Ascending aorta (tissue), 2 donors: ENCODE measurements at regions of chr4 and their contacts with region 1.

Region 1: DNA sequence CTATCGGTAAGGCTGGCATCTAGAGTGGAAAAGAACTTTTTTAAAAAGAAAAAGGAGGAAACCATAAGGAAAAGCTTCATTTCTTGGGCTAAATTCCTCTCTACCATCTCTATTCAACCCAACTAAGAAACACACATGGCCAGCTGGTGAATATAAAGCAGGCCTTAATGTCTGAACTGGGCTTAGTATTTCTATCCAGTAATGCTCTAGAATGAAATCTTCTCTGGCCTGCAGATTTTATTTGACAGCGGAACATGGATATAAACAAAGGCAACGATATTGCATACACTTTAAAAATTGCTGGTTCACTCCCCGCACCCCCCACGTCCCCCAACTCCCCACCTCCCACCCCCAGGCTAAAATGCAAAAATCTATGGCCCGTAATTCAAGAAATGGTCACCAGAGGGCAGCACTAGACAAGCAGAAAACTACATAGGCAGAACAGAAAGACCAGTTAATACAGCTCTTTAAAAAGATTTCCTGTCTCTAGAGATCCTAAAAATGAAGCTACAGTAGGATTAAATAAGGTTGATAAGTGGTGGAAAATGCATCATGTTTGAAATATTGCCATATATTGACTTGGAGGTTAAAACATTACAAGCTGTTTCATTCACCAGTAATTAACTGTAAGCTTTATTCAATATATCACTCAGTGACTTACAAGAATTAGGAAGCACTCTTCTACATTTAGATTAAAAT is 155.2 kb upstream of the GALNT7 start:
- DNase-seq: peak in 1 of 2 donors; percentile 72
- H3K4me3 ChIP-seq: no peak overlapping the region
- H3K27ac ChIP-seq: no peak overlapping the region
- H3K4me1 ChIP-seq: peaks cover 4 to 5% of the 10 kb centered on the region in 2 donors
- H3K27me3 ChIP-seq: no peaks in the 10 kb centered on the region
- CTCF ChIP-seq: peak; percentile 40 to 89 (median 85)

Region 2: DNA sequence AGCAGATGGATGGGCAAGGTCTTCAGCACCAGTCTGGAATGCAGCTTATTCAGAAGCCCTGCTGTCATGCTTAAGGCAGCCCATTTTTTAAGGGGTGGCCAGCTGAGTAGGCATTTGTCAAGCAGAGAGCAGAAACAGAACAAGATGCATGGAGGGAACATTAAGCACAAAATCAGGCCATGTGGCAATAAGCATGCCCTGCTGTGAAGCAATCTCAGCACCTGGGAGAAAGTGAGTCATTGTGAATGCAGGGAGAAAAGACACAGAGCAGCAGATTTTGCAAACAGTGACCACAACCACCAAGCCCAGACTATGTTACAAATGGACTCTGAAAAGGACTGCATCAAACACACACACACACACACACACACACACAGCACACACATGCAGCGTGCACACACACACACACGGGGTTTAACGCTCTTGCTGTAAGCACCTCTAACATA is 61.1 kb after region 1 on chr4:
- intact Hi-C with region 1: no loop called
- DNase-seq: no peak
- H3K4me3 ChIP-seq: no peak overlapping the region
- H3K27ac ChIP-seq: no peak overlapping the region
- H3K4me1 ChIP-seq: no peaks in the 10 kb centered on the region
- H3K27me3 ChIP-seq: no peaks in the 10 kb centered on the region
- CTCF ChIP-seq: no peak

Region 3: GRCh38 chr4:173168396-173169177 is 155.2 kb after region 1 on chr4 and contains the start of gene GALNT7:
- intact Hi-C with region 1: loop called (anchors 5 kb)
- DNase-seq: peak in 1 of 2 donors; percentile 80
- H3K4me3 ChIP-seq: peak within 1 kb of the TSS; percentile 70 to 98
- H3K27ac ChIP-seq: peak within 1 kb of the TSS; percentile 86 to 94
- H3K4me1 ChIP-seq: peaks cover 0 to 17% of the 10 kb centered on the region in 2 donors
- H3K27me3 ChIP-seq: no peaks in the 10 kb centered on the region
- CTCF ChIP-seq: no peak
- total RNA-seq, gene GALNT7: 8.2 TPM

Region 4: DNA sequence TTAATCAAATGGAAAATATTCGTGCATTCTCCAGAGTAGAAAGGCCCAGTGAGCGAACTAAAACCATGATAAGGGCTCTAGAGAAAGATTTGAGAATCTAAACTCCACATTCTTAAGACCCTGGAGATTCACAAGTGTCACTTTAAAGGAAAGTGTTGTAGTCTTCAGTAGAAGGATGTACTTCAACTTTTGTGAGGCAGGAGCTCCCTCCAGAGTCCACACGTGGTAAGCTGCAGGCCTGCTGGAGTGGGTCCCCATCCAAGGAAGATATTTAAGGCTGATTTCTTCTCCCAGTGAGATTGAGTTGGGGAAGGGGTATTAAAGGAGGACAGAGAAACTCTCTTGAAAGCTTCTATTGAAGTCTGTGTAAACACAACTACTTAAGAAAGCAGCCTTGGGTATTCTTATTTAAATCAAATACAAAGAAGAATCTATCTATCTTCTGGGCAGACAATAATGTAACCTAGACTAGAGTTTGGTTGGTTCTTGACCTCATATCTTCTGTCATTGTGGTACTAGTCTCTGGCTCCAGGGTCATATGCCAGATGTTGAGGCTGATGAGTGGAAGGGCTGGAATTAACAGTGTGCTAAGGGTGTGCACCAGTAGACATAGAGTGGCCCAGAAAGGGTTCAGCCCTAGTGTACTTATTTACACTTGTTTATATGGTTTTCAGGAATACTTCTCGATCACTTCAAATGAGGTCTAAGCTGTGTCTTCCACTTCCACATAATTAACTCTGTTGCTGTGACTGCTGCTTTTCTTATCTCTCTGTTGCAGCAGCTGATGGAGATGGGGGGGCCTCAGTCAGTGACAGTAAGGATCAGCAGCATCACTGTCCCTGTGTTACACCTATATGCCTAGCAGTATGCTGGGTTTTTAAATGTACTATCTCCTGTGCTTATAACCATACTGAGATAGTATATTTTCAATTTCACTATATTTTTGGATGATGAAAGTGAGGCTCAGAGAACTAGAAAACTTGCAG is 244.6 kb after region 1 on chr4:
- intact Hi-C with region 1: loop called (anchors 5 kb)
- DNase-seq: peak in 1 of 2 donors; percentile 69
- H3K4me3 ChIP-seq: no peak overlapping the region
- H3K27ac ChIP-seq: no peak overlapping the region
- H3K4me1 ChIP-seq: no peaks in the 10 kb centered on the region
- H3K27me3 ChIP-seq: no peaks in the 10 kb centered on the region
- CTCF ChIP-seq: peak; percentile 56 to 71 (median 58)

Region 5: GRCh38 chr4:173301518-173302201 is 288.3 kb after region 1 on chr4:
- intact Hi-C with region 1: loop called (anchors 5 kb)
- DNase-seq: no peak
- H3K4me3 ChIP-seq: no peak overlapping the region
- H3K27ac ChIP-seq: peak overlapping the region in 1 of 2 donors; percentile 31
- H3K4me1 ChIP-seq: peaks cover 0 to 7% of the 10 kb centered on the region in 2 donors
- H3K27me3 ChIP-seq: no peaks in the 10 kb centered on the region
- CTCF ChIP-seq: peak; percentile 44 to 86 (median 64)

Region 6: GRCh38 chr4:173380987-173381386 is 367.6 kb after region 1 on chr4:
- intact Hi-C with region 1: no loop called
- DNase-seq: no peak
- H3K4me3 ChIP-seq: no peak overlapping the region
- H3K27ac ChIP-seq: peak overlapping the region; percentile 7 to 17
- H3K4me1 ChIP-seq: peaks cover 2 to 9% of the 10 kb centered on the region in 2 donors
- H3K27me3 ChIP-seq: no peaks in the 10 kb centered on the region
- CTCF ChIP-seq: no peak